WTC11 (cell line): ENCODE measurements at regions of chr12 and their contacts with region 1.

Region 1: DNA sequence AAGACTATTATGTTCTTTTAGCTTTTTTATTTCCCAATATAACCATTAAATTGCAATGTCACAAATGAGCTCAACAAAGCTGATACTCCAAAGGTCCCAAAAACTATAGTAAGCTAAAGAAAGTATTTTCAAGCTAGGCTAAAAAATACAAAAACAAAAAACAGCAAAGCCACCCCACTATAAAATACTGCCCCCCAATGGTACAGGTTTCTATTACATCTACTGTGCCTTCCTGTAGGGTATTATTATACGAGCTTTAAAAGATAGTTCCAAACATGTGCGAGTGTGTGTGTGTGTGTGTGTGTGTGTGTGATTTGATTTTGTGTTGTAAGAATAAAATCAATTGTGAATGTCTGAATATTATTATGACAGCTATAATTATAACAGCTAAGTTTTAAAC is 1.1 kb downstream of the IFNG start:
- DNase-seq: no peak
- ATAC-seq: peak; percentile 57
- H3K4me3 Mint-ChIP-seq: no peak overlapping the region
- H3K27ac Mint-ChIP-seq: no peak overlapping the region
- H3K4me1 Mint-ChIP-seq: peaks cover 7% of the 10 kb centered on the region; the same call in 1 of the 2 replicates
- H3K27me3 Mint-ChIP-seq: no peaks in the 10 kb centered on the region
- CTCF ChIP-seq: peak; percentile 54; the same call in 1 of the 2 replicates

Region 2: GRCh38 chr12:67151886-67152285 is 1006.5 kb before region 1 on chr12:
- CTCF ChIA-PET with region 1: no interaction called
- POLR2A ChIA-PET with region 1: no interaction called
- DNase-seq: no peak
- ATAC-seq: no peak
- H3K4me3 Mint-ChIP-seq: no peak overlapping the region
- H3K27ac Mint-ChIP-seq: no peak overlapping the region
- H3K4me1 Mint-ChIP-seq: no peaks in the 10 kb centered on the region
- H3K27me3 Mint-ChIP-seq: no peaks in the 10 kb centered on the region
- CTCF ChIP-seq: no peak

Region 3: DNA sequence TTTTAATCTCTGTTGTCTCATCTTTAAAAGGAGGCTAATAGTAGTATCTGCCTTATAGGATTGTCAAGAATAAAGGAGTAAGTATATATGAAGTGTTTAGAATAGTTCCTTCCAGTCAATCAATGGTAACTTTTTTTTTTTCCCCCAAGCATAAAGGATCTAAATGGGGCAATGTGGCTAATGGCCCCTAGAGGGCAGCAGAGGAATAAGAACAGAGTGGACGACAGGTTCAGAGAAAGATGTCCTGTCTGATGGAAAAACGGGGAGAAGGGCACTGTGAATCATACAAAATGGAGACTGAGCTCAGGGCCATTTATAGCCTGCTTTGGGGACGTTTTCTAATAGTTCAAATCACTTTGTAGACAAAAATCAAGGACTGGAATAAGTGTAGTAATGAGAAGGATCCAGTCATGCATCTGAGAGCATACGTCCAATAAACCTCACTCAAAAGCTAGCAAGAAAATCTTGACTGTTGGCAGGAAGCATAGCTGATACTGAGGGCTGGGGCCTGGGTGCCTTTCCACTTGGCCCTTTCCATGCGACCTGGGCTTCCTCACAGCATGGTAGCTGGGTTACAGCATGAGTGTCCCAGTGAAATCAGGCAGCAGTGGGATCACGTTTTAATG is 117.9 kb before region 1 on chr12:
- CTCF ChIA-PET with region 1: interaction called, 63 read pairs
- POLR2A ChIA-PET with region 1: no interaction called
- DNase-seq: peak; percentile 65
- ATAC-seq: peak; percentile 95
- H3K4me3 Mint-ChIP-seq: no peak overlapping the region
- H3K27ac Mint-ChIP-seq: no peak overlapping the region
- H3K4me1 Mint-ChIP-seq: peaks cover 4% of the 10 kb centered on the region; the same call in 1 of the 2 replicates
- H3K27me3 Mint-ChIP-seq: no peaks in the 10 kb centered on the region
- CTCF ChIP-seq: peak; percentile 72

Region 4: GRCh38 chr12:68113644-68114043 is 44.8 kb before region 1 on chr12:
- CTCF ChIA-PET with region 1: interaction called, 56 read pairs
- POLR2A ChIA-PET with region 1: no interaction called
- DNase-seq: peak; percentile 69
- ATAC-seq: peak; percentile 85
- H3K4me3 Mint-ChIP-seq: no peak overlapping the region
- H3K27ac Mint-ChIP-seq: no peak overlapping the region
- H3K4me1 Mint-ChIP-seq: peaks cover 12% of the 10 kb centered on the region
- H3K27me3 Mint-ChIP-seq: peaks cover 4% of the 10 kb centered on the region
- CTCF ChIP-seq: peak; percentile 34; the same call in 1 of the 2 replicates

Region 5: DNA sequence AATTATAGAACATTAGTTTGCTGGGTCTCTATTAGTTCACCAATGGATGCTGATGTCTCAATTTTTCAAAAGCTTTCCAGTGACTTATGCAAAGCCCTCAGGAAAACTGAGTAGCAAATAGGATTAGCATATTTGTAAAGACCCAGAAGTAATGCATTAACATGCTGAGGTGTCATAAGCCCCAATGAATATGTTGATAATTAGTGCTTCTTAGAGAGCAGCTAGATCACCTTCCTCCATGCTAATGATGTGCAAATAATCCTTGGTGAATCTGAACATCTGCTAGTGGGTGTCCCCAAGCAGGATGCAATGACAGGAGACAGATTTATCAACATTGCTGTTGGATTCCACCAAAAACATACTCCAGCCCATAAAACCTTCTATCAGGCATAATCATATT is 17.9 kb before region 1 on chr12:
- CTCF ChIA-PET with region 1: interaction called, 15 read pairs
- POLR2A ChIA-PET with region 1: no interaction called
- DNase-seq: no peak
- ATAC-seq: no peak
- H3K4me3 Mint-ChIP-seq: no peak overlapping the region
- H3K27ac Mint-ChIP-seq: no peak overlapping the region
- H3K4me1 Mint-ChIP-seq: peaks cover 24% of the 10 kb centered on the region
- H3K27me3 Mint-ChIP-seq: peaks cover 4% of the 10 kb centered on the region
- CTCF ChIP-seq: no peak

Region 6: GRCh38 chr12:68169213-68169889 is 10.9 kb after region 1 on chr12:
- CTCF ChIA-PET with region 1: interaction called, 10 read pairs
- POLR2A ChIA-PET with region 1: no interaction called
- DNase-seq: no peak
- ATAC-seq: no peak
- H3K4me3 Mint-ChIP-seq: no peak overlapping the region
- H3K27ac Mint-ChIP-seq: no peak overlapping the region
- H3K4me1 Mint-ChIP-seq: no peaks in the 10 kb centered on the region
- H3K27me3 Mint-ChIP-seq: no peaks in the 10 kb centered on the region; the same call in 1 of the 2 replicates
- CTCF ChIP-seq: no peak